ENCODE measurements at regions of chr19 and their contacts with region 1.

Region 1: DNA sequence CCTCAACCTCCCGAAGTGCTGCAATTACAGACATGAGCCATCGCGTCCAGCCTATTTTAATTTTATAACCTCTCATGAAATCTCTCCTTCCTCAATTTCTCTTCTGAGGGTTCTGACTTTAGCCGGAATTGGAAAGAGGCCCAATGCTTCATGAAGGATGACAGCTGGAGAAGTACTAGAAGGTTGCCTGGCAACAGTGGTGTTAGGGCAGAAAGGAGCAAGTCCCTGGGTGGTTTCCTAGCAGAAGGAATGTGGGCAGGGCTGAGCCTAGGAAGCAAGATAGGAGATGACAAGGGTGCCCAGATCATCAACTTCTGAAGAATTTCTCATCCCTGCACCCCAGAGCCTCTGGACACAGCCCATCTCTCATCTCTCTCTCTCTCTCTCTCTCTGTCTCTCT is 25.8 kb downstream of the CACNG6 start:
- DNase-seq: peak; percentile 53
- ATAC-seq: no peak
- H3K4me3 ChIP-seq: no peak overlapping the region
- H3K27ac ChIP-seq: no peak overlapping the region
- H3K4me1 ChIP-seq: peaks cover 18% of the 10 kb centered on the region
- H3K27me3 ChIP-seq: no peaks in the 10 kb centered on the region
- CTCF ChIP-seq: no peak

Region 2: DNA sequence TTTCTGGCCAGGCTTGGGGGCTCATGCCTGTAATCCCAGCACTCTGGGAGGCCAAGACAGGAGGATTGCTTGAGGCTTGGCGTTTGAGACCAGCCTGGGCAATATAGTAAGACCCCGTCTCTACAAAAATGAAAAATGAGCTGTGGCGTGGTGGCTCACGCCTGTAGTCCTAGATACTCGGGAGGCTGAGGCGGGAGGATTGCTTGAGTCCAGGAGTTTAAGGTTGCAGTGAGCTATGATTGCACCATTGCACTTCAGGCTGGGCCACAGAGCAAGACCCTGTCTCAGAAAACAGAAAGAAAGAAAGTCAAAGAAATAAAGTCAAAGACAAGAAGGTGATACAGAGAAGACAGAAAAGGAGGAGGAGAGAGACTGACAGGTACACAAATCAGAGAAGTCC is 28.3 kb before region 1 on chr19:
- CTCF ChIA-PET with region 1: interaction called, 10 read pairs
- POLR2A ChIA-PET with region 1: no interaction called
- intact Hi-C with region 1: no loop called
- DNase-seq: no peak
- ATAC-seq: no peak
- H3K4me3 ChIP-seq: no peak overlapping the region
- H3K27ac ChIP-seq: no peak overlapping the region
- H3K4me1 ChIP-seq: 0 out of 2 replicates have a peak, but pooled peaks cover 3% of the 10 kb centered on the region
- H3K27me3 ChIP-seq: no peaks in the 10 kb centered on the region
- CTCF ChIP-seq: no peak

Region 3: GRCh38 chr19:54189735-54190502 is 172.7 kb after region 1 on chr19:
- CTCF ChIA-PET with region 1: no interaction called
- POLR2A ChIA-PET with region 1: no interaction called
- intact Hi-C with region 1: no loop called
- DNase-seq: peak; percentile 100
- ATAC-seq: peak; percentile 58
- H3K4me3 ChIP-seq: peak overlapping the region; percentile 74
- H3K27ac ChIP-seq: peak overlapping the region; percentile 89
- H3K4me1 ChIP-seq: peaks cover 19% of the 10 kb centered on the region
- H3K27me3 ChIP-seq: no peaks in the 10 kb centered on the region
- CTCF ChIP-seq: no peak

Measured in PC-3 (cell line).